ENCODE measurements at regions of chr16 and their contacts with region 1.

Region 1: DNA sequence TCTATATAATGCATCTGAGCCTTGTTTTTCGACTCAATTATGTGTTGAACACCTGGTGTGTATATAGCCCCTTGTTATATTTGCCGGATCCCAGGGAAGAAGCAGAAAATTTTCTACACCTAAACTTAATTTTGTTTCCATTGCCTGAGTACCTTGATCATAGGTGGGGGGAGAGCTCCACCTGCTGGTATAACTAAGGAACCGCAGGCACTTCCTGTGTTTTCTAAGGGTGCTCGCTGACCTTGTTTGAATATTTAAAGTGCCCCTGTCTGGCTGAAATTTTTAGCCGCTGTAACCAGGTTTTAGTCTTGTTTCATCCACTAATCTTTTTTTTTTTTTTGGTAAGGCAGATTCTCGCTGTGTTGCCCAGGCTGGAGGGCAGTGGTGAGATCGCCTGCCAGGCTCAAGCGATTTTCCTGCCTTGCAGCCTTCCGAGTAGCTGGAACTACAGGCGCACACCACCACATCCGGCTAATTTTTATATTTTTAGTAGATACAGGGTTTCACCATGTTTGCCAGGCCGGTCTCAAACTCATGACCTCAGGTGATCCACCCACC is 6.5 kb upstream of the NUBP1 start:
- DNase-seq: peak; percentile 58 to 70
- H3K4me3 ChIP-seq: no peak overlapping the region
- H3K27ac ChIP-seq: peak overlapping the region; percentile 28 to 40
- H3K4me1 ChIP-seq: no peaks in the 10 kb centered on the region
- H3K27me3 ChIP-seq: no peaks in the 10 kb centered on the region
- CTCF ChIP-seq: peak; percentile 91 to 94 (median 94)
- POLR2A ChIP-seq: no peak

Region 2: DNA sequence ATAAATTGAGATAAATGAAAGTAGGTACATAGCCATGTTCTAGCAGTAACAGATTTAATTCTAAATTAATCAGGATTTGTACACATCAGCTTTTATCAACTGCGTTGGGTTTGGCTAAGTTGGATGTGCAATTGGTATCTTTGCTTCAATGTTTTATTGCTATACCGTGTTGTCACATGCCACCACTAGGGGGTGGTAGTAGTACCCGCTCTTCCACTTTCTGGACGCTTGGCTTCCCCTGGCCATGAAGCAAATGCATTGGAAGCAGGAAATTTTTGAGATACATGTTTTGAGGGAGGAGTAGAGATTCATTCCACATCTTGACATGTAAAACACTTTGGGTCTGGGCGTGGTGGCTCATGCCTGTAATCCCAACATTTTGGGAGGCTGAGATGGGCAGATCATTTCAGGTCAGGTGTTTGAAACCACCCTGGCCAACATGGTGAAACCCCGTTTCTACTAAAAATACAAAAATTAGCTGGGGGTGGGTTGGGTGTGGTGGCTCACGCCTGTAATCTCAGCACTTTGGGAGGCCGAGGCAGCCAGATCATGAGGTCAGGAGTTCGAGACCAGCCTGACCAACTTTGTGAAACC is 215.4 kb before region 1 on chr16:
- intact Hi-C with region 1: loop called (anchors 5 kb)
- DNase-seq: peak; percentile 31 to 63
- H3K4me3 ChIP-seq: no peak overlapping the region
- H3K27ac ChIP-seq: no peak overlapping the region
- H3K4me1 ChIP-seq: no peaks in the 10 kb centered on the region
- H3K27me3 ChIP-seq: no peaks in the 10 kb centered on the region
- CTCF ChIP-seq: peak; percentile 54 to 80 (median 71)
- POLR2A ChIP-seq: no peak